ENCODE measurements at regions of chr11 and their contacts with region 1.

Region 1: GRCh38 chr11:6603287-6604080 is at the starts of genes ILK and RRP8:
- DNase-seq: peak; percentile 91 to 96
- ATAC-seq: peak; percentile 91 to 95 (median 94)
- H3K4me3 ChIP-seq: peak within 1 kb of the TSS; percentile 75
- H3K27ac ChIP-seq: peak within 1 kb of the TSS; percentile 100
- H3K4me1 ChIP-seq: peaks cover 52% of the 10 kb centered on the region
- H3K27me3 ChIP-seq: no peaks in the 10 kb centered on the region
- CTCF ChIP-seq: peak; percentile 19
- total RNA-seq, gene ILK: 68.3 to 96.6 (median 84.3) TPM
- total RNA-seq, gene RRP8: 11.6 to 18.6 (median 15.5) TPM

Region 2: DNA sequence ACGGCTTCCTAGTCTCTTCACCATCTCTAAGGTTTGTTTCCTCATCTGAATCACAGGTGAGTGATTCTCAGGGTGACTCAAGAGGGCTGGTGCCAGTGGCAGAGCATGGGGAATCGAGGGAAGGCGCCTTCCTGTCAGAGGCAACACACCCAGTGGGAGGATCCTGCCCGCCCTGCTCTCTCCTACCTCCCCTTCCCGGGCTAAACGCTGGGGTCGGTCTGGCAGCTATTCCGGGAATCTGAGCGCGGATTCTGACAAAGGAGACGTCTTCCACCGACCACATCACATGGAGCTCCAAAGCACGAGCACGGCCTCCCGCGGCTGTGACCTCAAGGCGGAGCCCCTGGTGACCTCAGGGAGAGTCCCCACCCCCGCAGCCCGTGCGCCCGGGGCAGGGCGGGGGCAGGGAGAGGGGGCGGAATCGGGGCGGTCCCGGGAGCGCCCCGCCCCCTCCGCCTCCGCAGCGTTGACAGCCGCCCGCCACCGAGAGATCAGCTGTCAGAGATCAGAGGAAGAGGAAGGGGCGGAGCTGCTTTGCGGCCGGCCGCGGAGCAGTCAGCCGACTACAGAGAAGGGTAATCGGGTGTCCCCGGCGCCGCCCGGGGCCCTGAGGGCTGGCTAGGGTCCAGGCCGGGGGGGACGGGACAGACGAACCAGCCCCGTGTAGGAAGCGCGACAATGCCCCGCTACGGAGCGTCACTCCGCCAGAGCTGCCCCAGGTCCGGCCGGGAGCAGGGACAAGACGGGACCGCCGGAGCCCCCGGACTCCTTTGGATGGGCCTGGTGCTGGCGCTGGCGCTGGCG is 213.4 kb before region 1 on chr11 and contains the start of gene SMPD1:
- intact Hi-C with region 1: loop called in 1 of 2 experiments (anchors 10 kb)
- DNase-seq: peak; percentile 94 to 97
- ATAC-seq: peak; percentile 97
- H3K4me3 ChIP-seq: peak within 1 kb of the TSS; percentile 89
- H3K27ac ChIP-seq: peak within 1 kb of the TSS; percentile 95
- H3K4me1 ChIP-seq: peaks cover 17% of the 10 kb centered on the region
- H3K27me3 ChIP-seq: no peaks in the 10 kb centered on the region
- CTCF ChIP-seq: no peak
- total RNA-seq, gene SMPD1: 37.6 to 57.4 (median 39.1) TPM

Region 3: DNA sequence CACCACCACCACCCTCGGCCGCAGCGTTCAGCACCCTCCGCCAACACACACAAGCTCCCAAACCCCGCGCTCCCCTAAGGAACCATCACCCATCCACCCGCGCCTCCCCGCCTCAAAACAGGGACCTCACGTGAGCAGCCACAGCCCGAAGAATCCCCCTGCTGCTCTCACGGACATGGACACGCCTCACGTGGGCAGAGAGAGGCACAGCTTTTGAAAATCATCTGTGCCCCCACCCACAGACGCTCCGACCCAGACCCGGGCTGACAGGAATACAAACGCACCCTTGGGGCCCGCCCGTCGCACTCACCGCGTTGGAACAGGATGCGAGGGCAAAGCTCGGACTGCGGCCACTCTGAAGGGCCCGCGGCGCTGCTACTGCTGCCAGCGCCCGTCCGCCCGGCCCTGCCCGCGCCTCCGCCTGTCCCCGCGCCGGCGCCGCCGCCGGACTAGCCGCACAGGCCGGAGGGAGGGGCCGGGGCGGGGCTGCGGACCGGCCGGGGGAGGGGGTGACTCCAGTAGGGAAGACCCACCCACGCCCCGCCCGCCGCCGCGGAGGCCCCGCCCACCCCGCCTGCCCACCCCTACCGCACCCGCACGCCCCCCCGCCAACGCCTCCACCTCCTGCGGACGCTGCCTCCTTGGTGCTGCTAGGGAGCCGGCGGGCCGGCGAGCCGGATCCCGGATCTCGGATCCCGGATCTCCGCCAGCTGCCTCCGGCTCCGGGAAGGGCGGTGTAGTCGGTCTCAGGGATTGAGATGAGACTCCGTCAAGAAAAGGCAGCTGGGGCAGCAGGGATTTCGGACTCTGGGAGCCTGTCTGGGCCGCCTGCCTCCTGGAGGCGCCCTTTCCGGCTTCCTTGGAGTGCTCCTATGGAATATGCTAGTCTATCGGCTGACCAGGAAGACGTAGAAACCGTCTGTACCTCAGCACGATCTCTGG is 129.7 kb before region 1 on chr11 and contains the start of gene TRIM3:
- intact Hi-C with region 1: loop called in 1 of 2 experiments (anchors 5 kb)
- DNase-seq: peak; percentile 96 to 97
- ATAC-seq: peak; percentile 91 to 95 (median 92)
- H3K4me3 ChIP-seq: peak within 1 kb of the TSS; percentile 91
- H3K27ac ChIP-seq: peak within 1 kb of the TSS; percentile 93
- H3K4me1 ChIP-seq: peaks cover 15% of the 10 kb centered on the region
- H3K27me3 ChIP-seq: no peaks in the 10 kb centered on the region
- CTCF ChIP-seq: no peak
- total RNA-seq, gene TRIM3: 9.6 to 15.3 (median 12.7) TPM

Region 4: DNA sequence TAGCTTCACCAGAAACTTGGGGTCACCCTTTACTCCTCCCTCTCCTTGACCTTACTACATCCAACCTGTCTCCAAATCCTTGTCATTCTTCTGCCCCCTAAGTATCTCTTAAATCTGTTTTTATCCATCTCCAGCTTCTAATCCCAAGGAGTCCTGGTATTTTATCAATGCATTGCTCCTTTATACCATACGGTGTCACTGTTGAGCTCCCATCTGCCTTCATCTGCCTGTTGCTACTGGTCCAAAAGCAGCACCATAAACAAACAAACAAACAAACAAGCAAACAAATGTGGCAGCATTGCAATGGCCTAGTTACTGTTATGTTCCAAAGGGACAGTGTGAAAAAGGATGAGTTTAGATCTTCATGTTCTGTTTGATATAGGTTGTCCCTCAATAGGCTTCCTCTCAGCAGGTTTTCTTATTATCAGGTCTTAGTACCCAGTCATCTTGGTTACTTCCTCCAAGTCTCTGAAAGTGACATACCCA is 72.2 kb before region 1 on chr11:
- intact Hi-C with region 1: loop called in 1 of 2 experiments (anchors 5 kb)
- DNase-seq: no peak
- ATAC-seq: peak; percentile 78 to 94 (median 84)
- H3K4me3 ChIP-seq: no peak overlapping the region
- H3K27ac ChIP-seq: no peak overlapping the region
- H3K4me1 ChIP-seq: no peaks in the 10 kb centered on the region
- H3K27me3 ChIP-seq: no peaks in the 10 kb centered on the region
- CTCF ChIP-seq: peak; percentile 77

Region 5: DNA sequence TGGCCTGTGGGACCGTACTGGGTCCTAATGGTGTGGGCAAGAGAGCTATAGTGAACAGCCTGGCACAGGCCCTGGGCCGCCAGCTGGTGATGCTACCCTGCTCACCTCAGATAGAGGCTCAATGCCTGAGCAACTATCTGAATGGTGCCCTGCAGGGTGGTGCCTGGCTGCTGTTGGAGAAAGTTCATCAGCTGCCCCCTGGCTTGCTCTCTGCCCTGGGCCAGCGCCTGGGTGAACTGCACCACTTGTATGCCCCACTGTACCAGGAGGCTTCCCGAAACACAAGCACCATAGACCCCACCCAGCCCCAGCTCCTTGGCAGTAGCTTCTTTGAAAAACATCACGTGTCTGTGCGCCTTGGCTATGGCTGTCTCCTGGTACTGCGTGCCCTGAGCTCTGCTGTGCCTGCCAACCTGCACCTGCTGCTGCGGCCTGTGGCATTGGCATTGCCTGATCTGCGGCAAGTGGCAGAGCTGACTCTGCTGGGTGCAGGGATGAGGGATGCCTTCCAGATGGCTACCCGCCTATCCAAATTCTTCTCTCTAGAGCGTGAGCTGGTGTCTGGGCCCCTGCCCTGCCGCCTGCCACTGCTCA is 57.4 kb before region 1 on chr11:
- intact Hi-C with region 1: loop called in 1 of 2 experiments (anchors 1 kb)
- DNase-seq: peak; percentile 68 to 89
- ATAC-seq: peak; percentile 95 to 99 (median 97)
- H3K4me3 ChIP-seq: no peak overlapping the region
- H3K27ac ChIP-seq: peak overlapping the region; percentile 81
- H3K4me1 ChIP-seq: peaks cover 14% of the 10 kb centered on the region
- H3K27me3 ChIP-seq: no peaks in the 10 kb centered on the region
- CTCF ChIP-seq: no peak

Region 6: GRCh38 chr11:6682936-6683861 is 79.7 kb after region 1 on chr11 and contains the start of gene MRPL17:
- intact Hi-C with region 1: no loop called
- DNase-seq: peak; percentile 99 to 100
- ATAC-seq: peak; percentile 97 to 99 (median 98)
- H3K4me3 ChIP-seq: peak within 1 kb of the TSS; percentile 96
- H3K27ac ChIP-seq: peak within 1 kb of the TSS; percentile 82
- H3K4me1 ChIP-seq: peaks cover 14% of the 10 kb centered on the region
- H3K27me3 ChIP-seq: no peaks in the 10 kb centered on the region
- CTCF ChIP-seq: peak; percentile 85
- total RNA-seq, gene MRPL17: 27.2 to 44.8 (median 38.8) TPM

Measured in psoas muscle (tissue), 8 donors.